ENCODE measurements at regions of chr15 and their contacts with region 1.

Region 1: GRCh38 chr15:98955961-98956723 is 51.5 kb downstream of the PGPEP1L start:
- DNase-seq: no peak
- H3K4me3 ChIP-seq: no peak overlapping the region
- H3K27ac ChIP-seq: peak overlapping the region; percentile 87 to 92
- H3K4me1 ChIP-seq: peaks cover 0 to 3% of the 10 kb centered on the region in 2 donors
- H3K27me3 ChIP-seq: no peaks in the 10 kb centered on the region
- CTCF ChIP-seq: no peak
- POLR2A ChIP-seq: no peak

Region 2: GRCh38 chr15:98933406-98933805 is 22.7 kb before region 1 on chr15:
- intact Hi-C with region 1: loop called (anchors 1 kb)
- DNase-seq: no peak
- H3K4me3 ChIP-seq: no peak overlapping the region
- H3K27ac ChIP-seq: no peak overlapping the region
- H3K4me1 ChIP-seq: no peaks in the 10 kb centered on the region
- H3K27me3 ChIP-seq: no peaks in the 10 kb centered on the region
- CTCF ChIP-seq: no peak
- POLR2A ChIP-seq: no peak